ENCODE measurements at regions of chr1 and their contacts with region 1.

Region 1: GRCh38 chr1:62333441-62333840 is 14.2 kb upstream of the KANK4 start:
- DNase-seq: no peak

Region 2: DNA sequence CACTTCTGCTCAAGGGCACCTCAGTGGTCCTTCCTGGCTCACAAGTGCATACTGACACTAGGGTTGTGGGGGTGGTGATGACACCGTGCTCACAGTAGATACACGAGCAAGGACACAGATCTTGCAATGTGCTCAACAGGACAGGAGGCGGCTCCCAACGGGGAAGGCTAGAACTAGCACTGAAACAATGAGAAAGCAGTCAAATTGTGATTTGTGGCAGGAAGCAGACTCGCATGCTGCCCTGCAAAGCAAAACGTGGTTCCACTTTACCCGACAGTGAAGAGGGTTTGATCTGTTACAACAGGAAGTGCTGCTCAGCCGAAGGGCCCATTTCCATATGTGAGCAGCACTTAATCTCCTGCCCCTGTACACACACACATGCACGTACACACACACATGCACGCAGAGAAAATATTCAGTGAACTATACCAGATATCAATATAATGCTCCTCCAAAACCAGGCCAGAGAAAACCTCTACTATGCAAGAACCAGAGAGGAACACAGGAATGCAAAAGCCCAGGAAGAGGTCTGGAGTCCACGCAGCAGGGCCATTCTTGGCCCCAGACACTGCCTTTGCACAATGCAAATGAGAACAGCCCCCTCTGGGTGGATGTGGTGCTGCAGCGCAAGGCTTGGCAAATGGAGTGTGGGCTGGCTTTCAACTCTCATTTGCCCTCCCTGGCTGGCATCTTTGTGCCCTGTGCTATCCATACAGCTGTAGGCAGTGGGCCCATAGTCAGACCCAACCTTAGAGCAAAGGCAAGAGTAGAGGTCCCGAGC is 61.3 kb before region 1 on chr1:
- CTCF ChIA-PET with region 1: no interaction called
- POLR2A ChIA-PET with region 1: no interaction called
- DNase-seq: peak; percentile 53

Region 3: DNA sequence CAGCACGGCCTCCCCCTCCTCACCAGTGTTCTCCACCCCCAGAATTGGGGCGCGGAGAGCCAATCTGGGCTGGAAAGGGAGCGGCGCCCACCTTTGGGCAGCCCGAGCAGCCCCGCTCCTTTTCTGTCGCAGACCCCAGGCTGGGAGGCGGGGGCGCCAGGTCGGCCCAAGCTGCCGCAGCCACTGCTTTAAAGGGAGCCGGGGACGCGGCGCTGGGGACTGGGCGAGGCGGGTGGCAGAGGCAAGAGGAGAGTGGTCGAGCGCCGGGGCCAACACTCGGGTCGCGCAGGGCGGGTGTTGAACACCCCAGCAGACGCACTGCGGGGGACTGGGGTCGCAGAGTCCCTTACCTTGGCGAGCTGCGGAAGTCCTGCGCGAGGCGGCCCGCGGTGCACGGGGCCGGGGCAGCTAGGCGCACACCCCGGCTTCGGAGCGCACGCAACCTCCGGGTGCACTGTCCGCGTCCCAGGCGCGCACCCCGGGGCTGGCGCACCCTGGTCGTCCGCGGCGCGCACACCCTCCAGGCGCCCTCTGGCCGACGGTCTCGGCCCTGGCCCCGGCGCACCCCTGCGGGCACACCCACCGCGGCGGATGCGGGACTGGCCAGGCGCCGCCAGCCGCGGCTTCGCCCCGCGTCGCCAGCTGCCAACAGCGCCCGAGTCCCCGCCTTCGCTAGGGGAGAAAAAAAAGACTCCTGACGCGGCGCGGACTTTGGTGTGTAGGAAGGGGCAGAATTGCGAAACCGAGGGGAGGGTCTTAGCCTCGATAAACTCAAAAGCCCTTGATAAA is 14.5 kb before region 1 on chr1 and contains the start of gene KANK4:
- CTCF ChIA-PET with region 1: no interaction called
- POLR2A ChIA-PET with region 1: no interaction called
- DNase-seq: peak; percentile 56

Region 4: DNA sequence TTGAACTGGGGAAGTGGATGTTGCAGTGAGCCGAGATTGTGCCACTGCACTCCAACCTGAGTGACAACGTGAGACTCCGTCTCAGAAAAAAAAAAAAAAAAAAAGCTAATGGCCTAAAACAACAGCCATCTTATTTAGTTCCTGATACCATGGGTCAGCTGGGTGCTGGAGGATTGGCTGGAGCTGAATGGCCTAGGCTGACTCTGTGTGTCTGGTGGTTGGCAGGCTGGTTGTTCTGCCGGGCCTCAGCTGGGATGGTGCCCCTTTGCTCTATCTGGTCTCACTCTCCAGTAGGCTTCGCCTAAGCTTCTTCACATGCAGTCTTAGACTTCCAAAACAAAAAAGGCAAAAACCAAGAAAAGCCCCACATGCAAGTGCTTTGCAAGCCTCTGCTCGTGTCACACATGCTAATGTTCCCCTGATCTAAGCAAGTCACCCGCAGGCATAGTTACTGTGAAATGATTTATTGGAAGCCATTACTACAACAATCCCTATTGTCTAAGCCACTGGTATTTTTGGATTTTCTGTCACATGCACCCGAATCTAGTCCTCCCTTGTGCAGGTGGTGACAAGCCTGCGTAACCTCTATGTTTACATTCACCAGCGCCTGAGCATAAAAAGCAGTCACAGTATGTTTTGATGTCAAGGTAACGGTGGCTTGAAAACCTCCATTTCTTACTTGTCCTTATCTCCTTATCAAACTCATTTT is 25.4 kb after region 1 on chr1:
- CTCF ChIA-PET with region 1: no interaction called
- POLR2A ChIA-PET with region 1: no interaction called
- DNase-seq: no peak

Region 5: DNA sequence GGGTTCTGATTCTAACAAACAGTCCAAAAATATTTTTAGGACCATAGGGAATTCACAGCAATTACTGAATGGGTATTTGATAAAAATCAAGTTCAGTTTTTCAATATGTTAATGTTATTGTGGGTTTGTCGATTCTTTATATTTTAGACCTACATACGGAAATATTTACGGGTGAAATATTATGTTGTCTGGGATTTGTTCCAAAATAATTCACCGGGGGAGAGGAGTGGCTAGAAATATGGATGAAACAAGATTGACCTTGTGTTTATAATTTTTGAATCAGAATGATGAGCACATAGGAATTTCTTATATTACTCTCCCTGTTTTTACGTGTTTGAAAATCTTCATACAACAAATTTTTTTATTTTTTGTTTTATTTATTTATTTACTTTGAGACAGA is 46.7 kb after region 1 on chr1:
- CTCF ChIA-PET with region 1: no interaction called
- POLR2A ChIA-PET with region 1: no interaction called
- DNase-seq: no peak

Region 6: GRCh38 chr1:62391369-62391971 is 58.0 kb after region 1 on chr1:
- CTCF ChIA-PET with region 1: interaction called, 12 read pairs
- POLR2A ChIA-PET with region 1: no interaction called
- DNase-seq: peak; percentile 79

Measured in HEK293T (cell line).